ENCODE measurements at regions of chr3 and their contacts with region 1.

Region 1: GRCh38 chr3:108090701-108091451 is at the start of gene CD47:
- DNase-seq: peak; percentile 97
- ATAC-seq: peak; percentile 81
- H3K4me3 Mint-ChIP-seq: peak within 1 kb of the TSS; percentile 97
- H3K27ac Mint-ChIP-seq: peak within 1 kb of the TSS; percentile 97
- H3K4me1 Mint-ChIP-seq: peaks cover 33% of the 10 kb centered on the region
- H3K27me3 Mint-ChIP-seq: no peaks in the 10 kb centered on the region
- CTCF ChIP-seq: no peak
- total RNA-seq, gene CD47: 158 and 184 TPM in 2 replicates

Region 2: GRCh38 chr3:107522510-107523288 is 568.2 kb before region 1 on chr3 and contains the start of gene BBX:
- CTCF ChIA-PET with region 1: no interaction called
- POLR2A ChIA-PET with region 1: no interaction called
- intact Hi-C with region 1: loop called (anchors 10 kb)
- DNase-seq: peak; percentile 89
- ATAC-seq: peak; percentile 87
- H3K4me3 Mint-ChIP-seq: peak within 1 kb of the TSS; percentile 96
- H3K27ac Mint-ChIP-seq: peak within 1 kb of the TSS; percentile 98
- H3K4me1 Mint-ChIP-seq: peaks cover 37% of the 10 kb centered on the region
- H3K27me3 Mint-ChIP-seq: no peaks in the 10 kb centered on the region
- CTCF ChIP-seq: no peak
- total RNA-seq, gene BBX: 75.8 and 77.5 TPM in 2 replicates

Region 3: GRCh38 chr3:108073764-108074431 is 17.0 kb before region 1 on chr3:
- CTCF ChIA-PET with region 1: no interaction called
- POLR2A ChIA-PET with region 1: interaction called, 4 read pairs
- intact Hi-C with region 1: loop called (anchors 1 kb)
- DNase-seq: no peak
- ATAC-seq: no peak
- H3K4me3 Mint-ChIP-seq: no peak overlapping the region
- H3K27ac Mint-ChIP-seq: peak overlapping the region; percentile 72
- H3K4me1 Mint-ChIP-seq: peaks cover 74% of the 10 kb centered on the region
- H3K27me3 Mint-ChIP-seq: no peaks in the 10 kb centered on the region
- CTCF ChIP-seq: no peak

Region 4: GRCh38 chr3:108100906-108101660 is 10.2 kb after region 1 on chr3:
- CTCF ChIA-PET with region 1: no interaction called
- POLR2A ChIA-PET with region 1: interaction called, 17 read pairs
- intact Hi-C with region 1: loop called (anchors 1 kb)
- DNase-seq: no peak
- ATAC-seq: peak; percentile 82
- H3K4me3 Mint-ChIP-seq: peak overlapping the region; percentile 61
- H3K27ac Mint-ChIP-seq: peak overlapping the region; percentile 87
- H3K4me1 Mint-ChIP-seq: peaks cover 71% of the 10 kb centered on the region
- H3K27me3 Mint-ChIP-seq: no peaks in the 10 kb centered on the region
- CTCF ChIP-seq: no peak

Region 5: DNA sequence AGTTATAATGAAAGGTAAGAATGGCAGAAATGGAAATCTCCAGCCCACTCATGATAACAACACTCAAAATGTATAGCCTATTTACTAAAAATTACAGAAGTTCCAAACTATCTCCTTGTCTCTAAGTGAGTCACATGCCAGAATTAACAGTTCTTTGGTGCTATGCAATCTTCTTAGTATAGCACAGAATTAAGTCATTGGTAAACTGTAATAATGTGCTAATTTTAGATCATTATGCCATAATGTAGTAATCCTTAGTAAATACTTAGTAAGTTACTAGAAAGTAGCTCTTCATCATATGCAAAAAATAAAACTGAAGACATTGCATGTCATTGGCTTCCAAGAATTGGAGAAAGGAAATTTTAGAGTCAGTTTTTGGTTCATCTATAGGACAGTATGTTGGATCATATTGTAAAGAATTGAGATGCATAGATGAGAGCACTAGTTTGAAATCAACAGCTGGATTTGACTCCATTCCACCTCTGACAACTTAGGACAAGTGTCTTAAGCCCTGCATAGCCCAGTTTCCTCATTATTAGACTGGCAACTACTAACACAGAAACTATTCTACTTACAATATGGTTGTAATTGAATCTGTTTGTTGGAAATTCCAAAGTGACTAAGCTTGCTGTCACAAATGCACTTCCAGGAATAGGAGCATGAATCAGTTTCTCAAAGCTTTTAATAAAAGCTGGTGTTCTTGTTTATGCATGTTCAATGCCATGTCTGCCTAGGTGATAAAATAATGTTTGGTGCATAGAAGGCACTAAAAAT is 40.0 kb after region 1 on chr3:
- CTCF ChIA-PET with region 1: interaction called, 7 read pairs
- POLR2A ChIA-PET with region 1: interaction called, 211 read pairs
- intact Hi-C with region 1: no loop called
- DNase-seq: no peak
- ATAC-seq: no peak
- H3K4me3 Mint-ChIP-seq: peak overlapping the region; percentile 74
- H3K27ac Mint-ChIP-seq: peak overlapping the region; percentile 92
- H3K4me1 Mint-ChIP-seq: peaks cover 96% of the 10 kb centered on the region
- H3K27me3 Mint-ChIP-seq: no peaks in the 10 kb centered on the region
- CTCF ChIP-seq: no peak

Region 6: GRCh38 chr3:108322352-108322751 is 231.5 kb after region 1 on chr3:
- CTCF ChIA-PET with region 1: no interaction called
- POLR2A ChIA-PET with region 1: interaction called, 9 read pairs
- intact Hi-C with region 1: loop called (anchors 2 kb)
- DNase-seq: no peak
- ATAC-seq: peak; percentile 91
- H3K4me3 Mint-ChIP-seq: no peak overlapping the region
- H3K27ac Mint-ChIP-seq: peak overlapping the region; percentile 57
- H3K4me1 Mint-ChIP-seq: peaks cover 14% of the 10 kb centered on the region
- H3K27me3 Mint-ChIP-seq: no peaks in the 10 kb centered on the region
- CTCF ChIP-seq: no peak